Endothelial cell of umbilical vein (primary cell): ENCODE measurements at regions of chr19 and their contacts with region 1.

Region 1: DNA sequence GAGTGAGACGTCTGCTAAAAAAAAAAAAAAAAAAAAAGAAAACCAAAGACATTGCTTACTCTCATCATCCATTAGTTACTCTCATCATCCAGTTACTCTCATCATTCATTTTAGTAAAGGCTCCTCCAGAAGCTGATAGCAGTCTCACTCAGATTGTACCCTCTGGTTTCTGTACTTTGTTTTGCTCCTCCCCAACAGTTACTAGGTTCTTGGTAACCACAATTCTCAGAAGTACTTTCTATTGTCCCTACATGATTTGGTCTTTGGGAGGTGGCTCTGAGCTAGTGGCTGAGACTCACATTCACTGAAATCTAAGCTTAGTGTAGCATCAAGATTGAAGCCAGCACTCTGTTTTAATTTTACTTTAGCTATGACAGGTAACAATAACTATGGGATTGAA is 14.3 kb downstream of the ERICH4 start:
- DNase-seq: peak; percentile 30
- H3K4me3 ChIP-seq: no peak overlapping the region
- H3K27ac ChIP-seq: peak overlapping the region; percentile 72
- H3K4me1 ChIP-seq: peaks cover 29% of the 10 kb centered on the region
- H3K27me3 ChIP-seq: no peaks in the 10 kb centered on the region
- CTCF ChIP-seq: no peak
- POLR2A ChIP-seq: no peak

Region 2: GRCh38 chr19:41351339-41352245 is 105.6 kb before region 1 on chr19:
- CTCF ChIA-PET with region 1: no interaction called
- POLR2A ChIA-PET with region 1: no interaction called
- dilution Hi-C with region 1: no loop called
- intact Hi-C with region 1: no loop called
- DNase-seq: peak; percentile 80
- H3K4me3 ChIP-seq: peak overlapping the region; percentile 75 to 99 (median 90)
- H3K27ac ChIP-seq: peak overlapping the region; percentile 70
- H3K4me1 ChIP-seq: peaks cover 12% of the 10 kb centered on the region
- H3K27me3 ChIP-seq: no peaks in the 10 kb centered on the region
- CTCF ChIP-seq: no peak
- POLR2A ChIP-seq: peak; percentile 74

Region 3: GRCh38 chr19:41439441-41440222 is 17.6 kb before region 1 on chr19 and contains the start of gene DMAC2:
- CTCF ChIA-PET with region 1: interaction called, 11 read pairs
- POLR2A ChIA-PET with region 1: no interaction called
- dilution Hi-C with region 1: no loop called
- intact Hi-C with region 1: no loop called
- DNase-seq: peak; percentile 98
- H3K4me3 ChIP-seq: peak within 1 kb of the TSS; percentile 66 to 87 (median 76)
- H3K27ac ChIP-seq: peak within 1 kb of the TSS; percentile 89
- H3K4me1 ChIP-seq: peaks cover 6% of the 10 kb centered on the region
- H3K27me3 ChIP-seq: peaks cover 0 to 2% of the 10 kb centered on the region in 2 experiments
- CTCF ChIP-seq: peak; percentile 37 to 52
- POLR2A ChIP-seq: peak; percentile 79
- total RNA-seq, gene DMAC2: 63.2 and 65.4 TPM in 2 replicates

Region 4: DNA sequence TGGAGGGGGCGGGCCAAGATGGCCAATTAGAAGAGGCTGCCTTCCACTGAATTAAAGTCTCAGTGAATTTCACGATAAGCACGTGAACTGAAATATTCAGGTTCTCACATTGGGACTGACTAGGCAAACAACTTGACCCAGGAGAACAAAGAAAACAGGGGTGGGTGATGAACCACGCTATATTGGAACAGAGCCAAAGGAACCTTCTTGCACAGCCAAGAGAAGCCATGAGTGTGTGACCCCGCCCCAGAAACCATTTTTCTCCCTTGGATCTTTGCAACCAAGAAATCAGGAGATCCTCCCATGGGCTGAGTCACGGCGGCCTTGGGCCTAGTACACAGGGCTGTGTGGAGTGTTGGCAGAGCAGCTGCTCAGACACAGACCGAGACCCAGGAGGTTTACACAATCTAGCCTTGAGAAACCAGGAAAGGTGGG is 22.5 kb after region 1 on chr19:
- CTCF ChIA-PET with region 1: interaction called, 14 read pairs
- POLR2A ChIA-PET with region 1: interaction called, 24 read pairs
- dilution Hi-C with region 1: no loop called
- intact Hi-C with region 1: loop called (anchors 1 kb)
- DNase-seq: peak; percentile 98
- H3K4me3 ChIP-seq: peak overlapping the region in 2 of 3 experiments; percentile 56 to 98
- H3K27ac ChIP-seq: peak overlapping the region; percentile 97
- H3K4me1 ChIP-seq: peaks cover 37% of the 10 kb centered on the region
- H3K27me3 ChIP-seq: peaks cover under 1 to 3% of the 10 kb centered on the region in 2 experiments
- CTCF ChIP-seq: no peak
- POLR2A ChIP-seq: peak; percentile 96

Region 5: GRCh38 chr19:41531438-41532311 is 74.4 kb after region 1 on chr19:
- CTCF ChIA-PET with region 1: interaction called, 140 read pairs
- POLR2A ChIA-PET with region 1: interaction called, 5 read pairs
- dilution Hi-C with region 1: no loop called
- intact Hi-C with region 1: loop called (anchors 1 kb)
- DNase-seq: peak; percentile 98
- H3K4me3 ChIP-seq: no peak overlapping the region
- H3K27ac ChIP-seq: peak overlapping the region; percentile 85
- H3K4me1 ChIP-seq: peaks cover 31% of the 10 kb centered on the region
- H3K27me3 ChIP-seq: peaks cover 17 to 24% of the 10 kb centered on the region in 2 experiments
- CTCF ChIP-seq: no peak
- POLR2A ChIP-seq: peak; percentile 85

Region 6: DNA sequence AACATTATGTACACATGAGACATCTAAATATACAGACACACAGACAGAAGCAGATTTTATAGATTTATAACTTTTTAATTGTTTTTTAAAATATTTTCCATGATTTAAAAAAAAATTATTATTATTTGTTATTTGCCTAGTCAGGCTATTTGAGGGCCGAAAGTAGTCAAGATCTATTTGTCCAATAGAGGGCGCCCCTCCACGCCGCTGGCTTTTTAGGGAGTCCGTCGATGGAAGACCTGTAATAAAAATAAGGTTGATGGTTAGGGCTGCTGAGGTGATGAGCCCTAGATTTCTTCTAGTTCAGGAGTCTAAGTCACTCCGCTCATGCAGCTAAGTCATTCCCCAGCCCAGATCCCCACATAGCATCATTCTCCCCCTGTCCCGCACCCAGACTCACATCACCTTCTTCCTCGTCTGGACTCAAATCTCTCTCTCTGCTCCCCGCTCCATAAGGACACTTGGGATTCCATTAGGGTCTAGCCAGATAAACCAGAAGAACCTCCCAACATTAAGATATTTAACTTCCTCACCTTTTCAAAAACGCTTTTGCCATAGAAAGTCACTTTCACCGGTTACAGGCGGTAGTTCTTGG is 84.8 kb after region 1 on chr19:
- CTCF ChIA-PET with region 1: interaction called, 140 read pairs
- POLR2A ChIA-PET with region 1: no interaction called
- dilution Hi-C with region 1: no loop called
- intact Hi-C with region 1: no loop called
- DNase-seq: peak; percentile 67
- H3K4me3 ChIP-seq: no peak overlapping the region
- H3K27ac ChIP-seq: no peak overlapping the region
- H3K4me1 ChIP-seq: peaks cover 10% of the 10 kb centered on the region
- H3K27me3 ChIP-seq: peaks cover 4 to 14% of the 10 kb centered on the region in 2 experiments
- CTCF ChIP-seq: peak; percentile 70 to 73
- POLR2A ChIP-seq: no peak

Region 7: DNA sequence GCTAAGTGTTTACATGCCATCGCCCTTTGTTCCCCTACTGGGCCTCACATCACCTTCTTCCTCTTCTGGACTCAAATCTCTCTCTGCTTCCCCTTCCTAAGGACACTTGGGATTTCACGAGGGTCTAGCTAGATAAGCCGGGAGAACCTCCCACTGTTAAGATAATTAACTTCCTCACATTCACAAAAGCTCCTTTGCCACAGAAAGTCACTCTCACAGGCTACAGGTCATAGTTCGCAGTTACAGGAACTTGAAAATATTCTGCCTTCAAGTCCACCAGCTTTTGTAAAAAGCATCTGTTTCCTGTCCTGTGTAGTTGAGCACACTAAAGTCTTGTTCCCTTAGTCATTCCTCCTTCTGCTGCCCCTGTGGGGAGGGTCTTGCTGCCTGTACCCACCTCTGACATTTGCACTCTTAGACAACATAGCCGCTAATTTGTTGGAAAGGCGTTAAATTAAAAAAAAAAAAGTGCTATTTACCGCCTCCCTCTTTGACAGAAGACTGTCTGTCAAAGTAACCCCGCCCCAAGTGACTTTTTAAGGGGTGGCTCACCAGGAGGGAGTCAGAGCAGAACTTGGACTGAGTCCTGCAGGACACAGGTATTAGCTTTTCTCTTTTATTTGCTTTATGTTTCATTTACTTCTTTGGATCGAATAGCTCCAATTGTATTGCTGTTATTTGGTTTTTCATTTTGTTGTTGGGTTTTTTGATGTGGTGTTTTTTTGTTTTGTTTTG is 91.9 kb after region 1 on chr19:
- CTCF ChIA-PET with region 1: interaction called, 10 read pairs
- POLR2A ChIA-PET with region 1: no interaction called
- dilution Hi-C with region 1: no loop called
- intact Hi-C with region 1: no loop called
- DNase-seq: peak; percentile 89
- H3K4me3 ChIP-seq: peak overlapping the region in 2 of 3 experiments; percentile 29 to 66
- H3K27ac ChIP-seq: peak overlapping the region; percentile 92
- H3K4me1 ChIP-seq: peaks cover 38% of the 10 kb centered on the region
- H3K27me3 ChIP-seq: no peaks in the 10 kb centered on the region
- CTCF ChIP-seq: no peak
- POLR2A ChIP-seq: peak; percentile 86

Region 8: DNA sequence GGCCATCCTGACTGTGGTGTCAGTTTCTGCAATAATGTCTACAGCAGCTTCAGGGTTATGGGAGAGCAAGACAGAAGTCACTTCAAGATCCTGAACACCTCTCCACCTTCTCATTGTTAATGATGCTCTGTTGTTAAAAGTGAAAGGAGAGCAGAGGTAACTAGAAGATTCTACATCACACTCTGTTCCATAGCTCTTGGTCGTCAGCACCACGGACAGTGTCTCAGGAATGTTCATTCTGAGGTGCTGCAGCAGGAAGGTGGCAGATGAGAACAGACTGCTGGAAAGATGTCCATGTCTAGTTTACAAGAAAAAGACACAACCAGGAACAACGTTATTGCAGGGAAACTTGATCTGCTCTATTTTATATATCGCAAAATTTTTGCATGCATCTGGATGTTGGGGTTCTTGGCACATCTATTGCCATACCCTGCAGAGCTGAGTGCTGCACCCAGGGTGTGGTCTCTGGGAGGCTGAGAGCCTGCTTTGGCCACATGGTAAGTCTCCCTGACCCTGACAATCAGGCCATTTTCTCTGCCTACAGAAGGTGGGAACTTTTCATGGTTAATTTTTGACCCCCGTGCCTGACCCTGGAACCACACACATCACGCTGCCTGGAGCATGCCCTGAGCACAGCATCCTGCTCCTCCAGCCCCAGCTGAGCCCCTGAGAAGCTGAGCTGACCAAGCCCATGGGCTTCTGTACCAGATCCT is 131.4 kb after region 1 on chr19:
- CTCF ChIA-PET with region 1: no interaction called
- POLR2A ChIA-PET with region 1: no interaction called
- dilution Hi-C with region 1: no loop called
- intact Hi-C with region 1: no loop called
- DNase-seq: peak; percentile 36
- H3K4me3 ChIP-seq: no peak overlapping the region
- H3K27ac ChIP-seq: no peak overlapping the region
- H3K4me1 ChIP-seq: no peaks in the 10 kb centered on the region
- H3K27me3 ChIP-seq: peaks cover 0 to 3% of the 10 kb centered on the region in 2 experiments
- CTCF ChIP-seq: no peak
- POLR2A ChIP-seq: no peak

Region 9: DNA sequence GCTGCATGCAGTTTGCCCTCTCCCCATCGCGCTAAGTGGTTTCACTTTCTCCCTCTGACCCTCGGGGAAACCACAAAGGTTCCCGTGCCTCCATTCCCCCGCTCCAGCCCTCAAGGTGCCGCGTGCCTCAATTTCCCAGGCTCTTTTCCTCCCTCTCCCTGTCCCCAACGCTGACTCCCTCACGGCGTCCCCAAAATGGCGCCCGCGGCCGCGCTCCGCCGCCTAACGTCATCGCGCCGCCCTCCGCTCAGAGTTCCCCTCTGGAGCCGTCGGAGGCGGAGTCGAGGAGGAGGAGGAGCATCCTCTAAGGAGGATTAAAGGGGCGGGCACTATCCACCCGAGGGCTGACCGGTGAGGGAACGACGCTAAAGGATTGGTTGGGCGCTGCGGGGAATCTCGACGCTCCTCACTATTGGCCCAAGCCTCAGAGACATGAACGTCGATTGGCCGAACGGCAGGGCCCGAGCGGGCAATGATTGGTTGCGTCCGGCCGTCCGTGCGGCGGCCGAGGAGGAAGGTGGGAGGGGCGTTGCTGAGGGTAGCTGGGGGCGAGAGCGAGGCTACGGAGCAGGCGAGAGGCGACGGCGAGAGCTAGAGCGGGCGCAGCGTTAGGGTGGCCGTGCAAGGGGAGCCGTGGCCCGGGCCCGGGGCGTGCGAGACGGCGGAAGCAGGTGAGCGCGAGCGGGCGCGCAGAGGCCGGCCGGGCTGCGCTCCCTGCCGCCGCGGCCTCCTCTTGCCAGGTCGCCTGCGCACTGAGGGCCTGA is 618.6 kb after region 1 on chr19 and contains the start of gene ZNF574:
- CTCF ChIA-PET with region 1: no interaction called
- POLR2A ChIA-PET with region 1: no interaction called
- dilution Hi-C with region 1: no loop called
- intact Hi-C with region 1: no loop called
- DNase-seq: peak; percentile 100
- H3K4me3 ChIP-seq: peak within 1 kb of the TSS; percentile 89 to 92 (median 90)
- H3K27ac ChIP-seq: peak within 1 kb of the TSS; percentile 85
- H3K4me1 ChIP-seq: peaks cover 16% of the 10 kb centered on the region
- H3K27me3 ChIP-seq: peaks cover 2% of the 10 kb centered on the region in 2 experiments
- CTCF ChIP-seq: no peak
- POLR2A ChIP-seq: no peak
- total RNA-seq, gene ZNF574: 14.0 and 15.3 TPM in 2 replicates